ENCODE measurements at regions of chr17 and their contacts with region 1.

Region 1: GRCh38 chr17:51097708-51098446 is 22.8 kb downstream of the SPAG9 start:
- DNase-seq: no peak
- ATAC-seq: no peak
- H3K4me3 ChIP-seq: no peak overlapping the region
- H3K27ac ChIP-seq: no peak overlapping the region
- H3K4me1 ChIP-seq: no peaks in the 10 kb centered on the region
- H3K27me3 ChIP-seq: no peaks in the 10 kb centered on the region
- CTCF ChIP-seq: no peak

Region 2: DNA sequence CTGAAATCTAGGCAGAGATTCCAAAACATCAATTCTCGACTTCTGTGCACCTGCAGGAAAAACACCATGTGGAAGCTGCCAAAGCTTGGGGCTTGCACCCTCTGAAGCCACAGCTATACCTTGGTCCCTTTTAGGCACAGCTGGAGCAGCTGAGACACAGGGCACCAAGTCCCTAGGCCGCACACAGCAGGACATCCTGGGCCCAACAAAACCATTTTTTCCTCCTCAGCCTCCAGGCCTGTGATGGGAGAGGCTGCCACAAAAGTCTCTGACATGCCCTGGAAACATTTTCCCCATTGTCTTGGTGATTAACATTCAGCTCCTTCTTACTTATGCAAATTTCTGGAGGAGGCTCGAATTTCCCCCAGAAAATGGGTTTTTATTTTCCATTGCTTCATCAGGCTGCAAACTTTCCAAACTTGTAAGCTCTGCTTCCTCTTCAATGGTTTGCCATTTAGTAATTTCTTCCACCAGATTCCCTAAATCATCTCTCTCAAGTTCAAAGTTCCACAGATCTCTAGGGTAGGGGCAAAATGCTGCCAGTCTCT is 872.1 kb before region 1 on chr17:
- CTCF ChIA-PET with region 1: no interaction called
- POLR2A ChIA-PET with region 1: interaction called, 11 read pairs
- in situ Hi-C with region 1: no loop called
- intact Hi-C with region 1: no loop called
- DNase-seq: no peak
- ATAC-seq: no peak
- H3K4me3 ChIP-seq: no peak overlapping the region
- H3K27ac ChIP-seq: no peak overlapping the region
- H3K4me1 ChIP-seq: no peaks in the 10 kb centered on the region
- H3K27me3 ChIP-seq: no peaks in the 10 kb centered on the region
- CTCF ChIP-seq: no peak

Region 3: DNA sequence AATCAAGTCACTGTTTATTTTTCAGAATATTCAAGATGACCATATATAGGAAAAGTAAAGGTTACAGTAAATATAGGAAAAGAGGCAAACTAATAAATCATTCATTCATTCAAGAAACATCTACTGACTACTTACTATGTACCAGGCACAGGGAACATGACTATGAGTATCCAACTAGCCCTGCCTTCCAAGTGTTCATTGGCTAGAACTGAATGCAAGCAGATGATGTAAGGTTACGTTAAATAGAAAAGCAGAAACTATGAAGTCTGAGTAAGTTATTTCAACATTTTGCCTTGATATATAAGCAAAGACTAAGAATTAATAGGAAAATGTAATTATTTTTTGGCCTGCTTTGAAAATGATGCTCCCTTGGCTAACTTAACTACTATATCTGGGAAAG is 13.9 kb before region 1 on chr17:
- CTCF ChIA-PET with region 1: no interaction called
- POLR2A ChIA-PET with region 1: interaction called, 14 read pairs
- in situ Hi-C with region 1: no loop called
- intact Hi-C with region 1: no loop called
- DNase-seq: no peak
- ATAC-seq: no peak
- H3K4me3 ChIP-seq: no peak overlapping the region
- H3K27ac ChIP-seq: no peak overlapping the region
- H3K4me1 ChIP-seq: peaks cover 8% of the 10 kb centered on the region
- H3K27me3 ChIP-seq: no peaks in the 10 kb centered on the region
- CTCF ChIP-seq: no peak

Measured in Panc1 (cell line).